ENCODE measurements at regions of chr17 and their contacts with region 1.

Region 1: GRCh38 chr17:40443583-40444327 is 505 bp downstream of the IGFBP4 start:
- DNase-seq: peak; percentile 93
- H3K4me3 Mint-ChIP-seq: peak overlapping the region; percentile 81
- H3K27ac Mint-ChIP-seq: peak overlapping the region; percentile 89
- H3K4me1 Mint-ChIP-seq: peaks cover 58% of the 10 kb centered on the region
- H3K27me3 Mint-ChIP-seq: peaks cover 2% of the 10 kb centered on the region

Region 2: GRCh38 chr17:40362696-40363110 is 81.1 kb before region 1 on chr17:
- intact Hi-C with region 1: loop called (anchors 2 kb)
- DNase-seq: peak; percentile 96
- H3K4me3 Mint-ChIP-seq: peak overlapping the region; percentile 83
- H3K27ac Mint-ChIP-seq: peak overlapping the region; percentile 67
- H3K4me1 Mint-ChIP-seq: peaks cover 20% of the 10 kb centered on the region
- H3K27me3 Mint-ChIP-seq: no peaks in the 10 kb centered on the region

Region 3: DNA sequence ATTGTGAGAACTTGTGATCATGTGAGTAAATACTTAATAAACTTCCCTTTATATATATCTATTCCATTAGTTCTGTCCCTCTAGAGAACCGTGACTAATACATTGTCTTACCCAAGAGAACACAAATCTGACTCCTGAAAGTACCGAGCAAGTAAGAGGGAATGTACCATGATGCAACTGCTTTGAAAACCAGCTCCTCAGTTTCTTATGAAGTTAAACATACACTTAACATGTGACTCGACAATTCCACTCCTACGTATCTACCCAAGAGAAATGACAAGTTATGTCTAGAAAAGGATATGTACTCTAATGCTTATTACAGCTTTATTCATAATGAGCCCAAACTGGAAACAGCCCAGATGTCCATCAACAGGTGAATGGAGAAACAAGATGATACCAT is 70.4 kb before region 1 on chr17:
- intact Hi-C with region 1: no loop called
- DNase-seq: no peak
- H3K4me3 Mint-ChIP-seq: no peak overlapping the region
- H3K27ac Mint-ChIP-seq: peak overlapping the region; percentile 76
- H3K4me1 Mint-ChIP-seq: peaks cover 30% of the 10 kb centered on the region
- H3K27me3 Mint-ChIP-seq: peaks cover 4% of the 10 kb centered on the region

Region 4: DNA sequence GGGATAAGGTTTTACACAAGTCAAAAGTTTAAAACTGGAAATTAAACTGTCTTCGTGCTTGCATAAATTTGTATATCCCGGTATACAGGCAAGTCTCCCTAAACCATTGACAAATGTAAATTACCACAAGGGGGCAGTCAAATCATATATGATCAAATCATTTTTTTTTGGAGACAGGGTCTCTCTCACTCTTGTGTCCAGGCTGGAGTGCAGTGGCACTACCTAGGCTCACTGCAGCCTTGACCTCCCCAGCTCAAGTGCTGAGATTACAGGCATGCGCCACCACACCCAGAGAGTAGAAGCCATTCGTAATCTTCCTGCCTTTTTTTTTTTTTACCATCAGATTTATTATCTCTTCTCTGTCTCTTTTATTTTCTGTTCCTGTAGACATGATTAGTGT is 44.6 kb before region 1 on chr17:
- intact Hi-C with region 1: loop called (anchors 2 kb)
- DNase-seq: peak; percentile 65
- H3K4me3 Mint-ChIP-seq: no peak overlapping the region
- H3K27ac Mint-ChIP-seq: peak overlapping the region; percentile 59
- H3K4me1 Mint-ChIP-seq: peaks cover 27% of the 10 kb centered on the region
- H3K27me3 Mint-ChIP-seq: no peaks in the 10 kb centered on the region

Region 5: GRCh38 chr17:40417609-40418427 is 25.9 kb before region 1 on chr17 and contains the start of gene TOP2A:
- intact Hi-C with region 1: loop called (anchors 2 kb)
- DNase-seq: peak; percentile 99
- H3K4me3 Mint-ChIP-seq: peak within 1 kb of the TSS; percentile 99
- H3K27ac Mint-ChIP-seq: peak within 1 kb of the TSS; percentile 97
- H3K4me1 Mint-ChIP-seq: peaks cover 31% of the 10 kb centered on the region
- H3K27me3 Mint-ChIP-seq: no peaks in the 10 kb centered on the region
- total RNA-seq, gene TOP2A: 189 and 194 TPM in 2 replicates

Region 6: DNA sequence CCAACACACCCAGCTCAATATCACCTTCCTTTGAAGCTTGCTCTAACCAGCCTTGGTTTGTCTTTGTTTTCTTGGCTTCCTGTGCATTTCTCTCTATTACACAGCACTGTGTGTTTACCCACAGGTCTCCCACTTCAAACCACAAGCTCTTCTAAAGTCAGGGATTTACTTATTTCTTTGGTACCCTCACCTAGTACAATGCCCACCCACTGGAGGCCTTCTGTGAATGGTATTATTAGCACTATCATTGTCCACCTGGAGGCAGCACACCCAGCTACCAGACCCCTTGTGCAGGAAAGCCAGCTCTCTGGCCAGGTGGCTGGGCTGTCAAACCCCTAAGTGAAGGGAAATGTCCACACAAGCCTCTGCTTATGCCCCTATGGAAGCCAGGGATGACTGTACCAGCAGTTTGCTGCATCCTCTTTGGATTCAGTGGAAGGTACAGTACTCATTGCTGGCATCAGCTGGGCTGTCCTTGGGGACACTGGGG is 16.7 kb before region 1 on chr17:
- intact Hi-C with region 1: loop called (anchors 1 kb)
- DNase-seq: peak; percentile 84
- H3K4me3 Mint-ChIP-seq: peak overlapping the region; percentile 57
- H3K27ac Mint-ChIP-seq: peak overlapping the region; percentile 77
- H3K4me1 Mint-ChIP-seq: peaks cover 48% of the 10 kb centered on the region
- H3K27me3 Mint-ChIP-seq: peaks cover 18% of the 10 kb centered on the region

Region 7: DNA sequence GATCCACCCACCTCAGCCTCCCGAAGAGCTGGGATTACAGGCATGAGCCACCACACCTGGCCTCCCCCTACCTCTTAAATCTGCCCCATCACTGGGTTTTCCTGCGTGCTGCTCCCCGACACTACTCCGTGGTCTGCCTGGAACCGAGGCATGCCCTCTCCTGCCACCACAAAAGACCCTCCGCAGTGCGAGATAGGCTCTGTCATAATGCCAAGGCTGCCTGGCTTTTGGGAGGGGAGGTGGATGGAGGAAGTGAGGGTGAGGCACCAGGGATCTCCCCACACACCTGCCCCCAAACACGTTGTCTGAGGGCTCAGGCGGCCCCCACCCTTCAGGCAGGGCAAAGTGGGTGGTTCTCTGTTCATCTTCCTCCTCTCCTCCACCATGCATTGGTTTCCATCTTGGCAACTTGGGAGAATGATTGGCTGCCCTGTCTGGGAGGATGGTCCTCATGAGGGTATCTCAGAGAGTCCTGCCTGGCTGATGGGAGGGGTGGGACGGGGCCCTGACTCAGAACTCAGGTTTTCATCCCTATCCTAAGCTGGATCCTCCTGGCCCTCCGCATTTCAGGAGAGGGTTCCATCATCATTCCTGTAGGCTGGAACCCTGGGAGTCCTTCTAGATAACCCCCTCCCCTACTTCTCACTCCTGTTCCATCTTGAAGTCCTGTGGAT is 22.7 kb after region 1 on chr17:
- intact Hi-C with region 1: no loop called
- DNase-seq: no peak
- H3K4me3 Mint-ChIP-seq: no peak overlapping the region
- H3K27ac Mint-ChIP-seq: peak overlapping the region; percentile 25
- H3K4me1 Mint-ChIP-seq: peaks cover 4% of the 10 kb centered on the region
- H3K27me3 Mint-ChIP-seq: peaks cover 4% of the 10 kb centered on the region

Region 8: DNA sequence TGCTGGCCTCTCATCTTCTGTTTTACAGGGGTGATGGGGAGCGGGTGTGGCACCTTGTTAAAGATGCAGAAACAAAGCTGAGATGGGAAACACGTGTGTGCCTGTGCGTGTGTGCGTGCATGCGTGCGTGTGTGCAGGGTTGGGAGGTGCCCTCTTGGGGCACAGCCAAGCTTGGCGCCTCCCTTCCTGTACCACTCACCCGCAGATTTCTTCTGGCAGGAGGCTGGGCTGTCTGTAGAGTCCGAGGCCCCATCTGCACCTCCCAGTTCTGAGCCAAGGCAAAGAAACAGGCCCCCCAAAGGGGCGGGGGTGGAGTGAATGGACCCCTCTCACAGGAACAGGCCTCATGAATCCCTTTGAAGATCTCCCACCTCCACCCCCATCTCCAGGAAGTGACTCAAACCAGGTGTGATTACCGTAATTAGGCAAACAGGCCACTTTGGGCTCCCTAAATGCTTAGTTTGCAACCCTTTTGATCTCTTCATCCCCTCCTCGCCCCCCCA is 36.8 kb after region 1 on chr17:
- intact Hi-C with region 1: loop called (anchors 2 kb)
- DNase-seq: peak; percentile 93
- H3K4me3 Mint-ChIP-seq: peak overlapping the region; percentile 79
- H3K27ac Mint-ChIP-seq: peak overlapping the region; percentile 95
- H3K4me1 Mint-ChIP-seq: peaks cover 75% of the 10 kb centered on the region
- H3K27me3 Mint-ChIP-seq: no peaks in the 10 kb centered on the region

Region 9: DNA sequence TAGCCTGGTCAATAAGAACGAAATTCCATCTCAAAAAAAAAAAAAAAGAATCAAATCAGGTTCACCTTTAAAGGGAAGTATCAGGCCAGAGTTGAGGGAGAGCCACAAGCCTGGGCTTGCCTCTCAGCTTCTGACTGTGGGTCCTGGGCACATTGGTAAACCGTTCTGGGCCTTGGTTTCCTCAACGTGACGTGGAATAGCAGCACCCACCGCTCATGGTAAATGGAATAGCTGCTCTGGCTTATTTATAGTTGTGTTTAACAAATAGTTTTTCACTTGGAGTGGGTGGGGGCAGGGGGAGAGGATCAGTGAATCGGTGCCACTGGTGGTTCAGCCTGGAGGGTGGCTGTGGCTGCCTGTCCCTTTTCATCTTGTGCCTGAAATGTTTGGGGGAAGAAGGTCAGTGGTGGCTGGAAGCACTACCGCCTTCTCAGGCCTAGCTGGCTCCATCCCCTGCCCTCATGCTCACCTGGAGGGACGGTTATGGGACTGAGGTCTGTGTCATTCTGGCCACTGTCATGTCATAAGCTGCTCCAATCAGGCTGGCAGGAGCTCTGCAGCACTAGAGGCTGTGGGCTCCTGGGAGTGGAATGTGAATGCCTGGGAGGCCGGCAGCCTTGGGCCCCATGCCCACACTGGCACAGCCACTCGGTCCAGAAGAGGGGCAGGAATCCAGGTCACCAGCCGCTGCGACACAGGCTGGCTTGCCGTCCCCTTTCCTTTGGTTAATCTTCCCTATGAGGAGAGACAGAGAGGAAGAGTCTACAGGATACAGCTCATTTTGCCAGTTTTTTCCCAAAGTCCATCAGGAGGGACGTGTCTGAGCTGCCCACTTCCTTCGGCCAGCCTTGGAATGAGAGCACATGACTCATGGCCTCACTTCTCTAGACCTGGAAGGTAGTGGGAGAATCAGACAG is 94.5 kb after region 1 on chr17:
- intact Hi-C with region 1: no loop called
- DNase-seq: no peak
- H3K4me3 Mint-ChIP-seq: no peak overlapping the region
- H3K27ac Mint-ChIP-seq: peak overlapping the region; percentile 43
- H3K4me1 Mint-ChIP-seq: peaks cover 88% of the 10 kb centered on the region
- H3K27me3 Mint-ChIP-seq: peaks cover 1% of the 10 kb centered on the region